G401 (cell line): ENCODE measurements at regions of chr7 and their contacts with region 1.

Region 1: GRCh38 chr7:73851410-73852234 is 9.3 kb upstream of the METTL27 start:
- DNase-seq: no peak

Region 2: GRCh38 chr7:73792594-73793292 is 58.9 kb before region 1 on chr7:
- in situ Hi-C with region 1: no loop called
- DNase-seq: peak; percentile 11

Region 3: DNA sequence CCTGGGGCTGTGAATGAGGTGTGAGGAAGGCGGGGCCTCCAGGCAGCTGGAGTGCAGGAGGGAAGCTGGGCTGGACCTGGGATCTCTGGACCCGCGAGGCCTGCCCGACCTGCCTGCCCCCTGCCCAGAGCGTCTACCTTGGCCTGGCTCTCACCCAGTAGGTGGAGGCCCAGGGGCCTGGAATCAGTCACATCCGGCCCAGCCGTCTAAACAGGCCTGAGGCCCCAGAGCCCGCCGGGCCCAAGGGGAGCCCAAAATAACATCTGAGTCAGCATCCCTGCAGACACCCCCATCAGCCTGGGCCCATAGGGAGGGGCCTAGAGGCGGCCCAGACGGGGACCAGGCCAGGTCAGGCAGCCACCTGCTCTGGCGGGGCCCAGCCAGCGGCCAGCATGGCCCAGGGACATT is 161.2 kb after region 1 on chr7:
- in situ Hi-C with region 1: loop called (anchors 25 kb)
- DNase-seq: no peak